GM12878 (cell line): ENCODE measurements at regions of chr17 and their contacts with region 1.

Region 1: DNA sequence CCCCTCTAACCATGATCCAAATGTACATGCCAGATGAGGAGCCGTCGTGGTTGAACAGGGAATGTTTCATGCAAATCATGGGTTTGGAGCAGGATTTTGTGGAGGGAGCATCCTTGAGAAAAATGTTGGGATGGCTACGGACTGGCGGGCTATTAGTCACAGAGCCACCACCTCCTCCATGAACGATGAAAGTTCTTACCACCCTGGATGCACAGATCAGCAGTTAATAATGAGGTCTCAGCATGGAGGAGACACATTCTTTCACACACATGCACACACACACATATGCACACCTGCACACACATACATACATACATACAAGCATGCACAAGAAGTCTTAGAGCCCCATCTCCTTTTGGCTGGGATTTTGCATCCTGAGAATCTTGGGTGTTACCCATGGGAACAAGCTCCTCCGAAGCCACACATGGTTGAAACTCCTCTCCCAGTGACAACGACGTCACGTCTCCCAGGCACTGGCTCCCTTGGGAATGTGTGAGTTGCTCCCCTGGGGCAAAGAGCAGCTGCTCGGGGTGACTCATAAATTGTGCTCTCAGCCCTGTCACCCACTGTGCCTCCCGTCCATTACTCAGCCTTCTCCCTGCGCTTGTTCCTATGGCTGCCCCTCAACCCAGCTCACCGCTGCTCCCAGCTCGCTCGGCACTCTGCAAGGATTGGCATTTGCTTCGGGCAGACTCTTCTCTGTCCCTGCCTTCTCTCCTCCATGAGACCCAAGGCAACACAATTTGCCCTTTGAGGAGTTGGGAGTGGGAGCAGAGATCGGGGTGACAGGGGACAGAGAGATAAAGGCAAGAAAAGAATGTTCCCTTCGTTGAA is 344.6 kb downstream of the SOX9 start:
- DNase-seq: peak; percentile 93
- ATAC-seq: peak; percentile 78
- H3K4me3 ChIP-seq: peak overlapping the region; percentile 10; the same call in 1 of the 2 replicates
- H3K27ac ChIP-seq: peak overlapping the region; percentile 78
- H3K4me1 ChIP-seq: peaks cover 41% of the 10 kb centered on the region
- H3K27me3 ChIP-seq: no peaks in the 10 kb centered on the region
- CTCF ChIP-seq: peak in 1 of 3 experiments; percentile 30; a peak in 1 of 6 replicates
- EP300 ChIP-seq: peak; percentile 38 to 66; a peak in 3 of 4 replicates
- POLR2A ChIP-seq: no peak
- RAD21 ChIP-seq: 0 out of 2 replicates have a peak, but pooled peaks have one; percentile 1

Region 2: DNA sequence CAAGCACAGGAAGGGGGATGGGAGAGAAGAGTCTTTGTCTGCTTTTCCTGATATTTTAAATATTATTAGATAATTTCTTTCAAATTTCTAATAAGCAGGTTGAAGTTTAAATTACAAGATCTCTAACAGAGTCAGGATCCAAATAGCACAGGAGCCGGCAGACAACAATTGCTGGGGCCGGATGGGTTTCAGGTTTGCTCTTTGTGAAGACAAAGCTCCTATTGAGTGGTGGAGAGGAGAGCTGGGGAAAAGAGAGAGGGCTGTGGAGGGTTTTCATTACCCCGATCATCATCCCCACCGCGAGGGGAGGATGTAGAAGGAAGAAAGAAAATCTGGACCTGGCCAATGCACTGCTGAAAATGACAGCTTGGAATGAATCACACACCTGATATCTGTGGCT is 147.3 kb before region 1 on chr17:
- CTCF ChIA-PET with region 1: interaction called, 4 read pairs
- POLR2A ChIA-PET with region 1: no interaction called
- RAD21 ChIA-PET with region 1: interaction called, 14 read pairs
- SMC1A ChIA-PET with region 1: interaction called, 21 read pairs
- in situ Hi-C with region 1: no loop called
- intact Hi-C with region 1: loop called (anchors 1 kb)
- DNase-seq: no peak
- ATAC-seq: peak; percentile 13
- H3K4me3 ChIP-seq: no peak overlapping the region
- H3K27ac ChIP-seq: no peak overlapping the region
- H3K4me1 ChIP-seq: peaks cover 16% of the 10 kb centered on the region
- H3K27me3 ChIP-seq: no peaks in the 10 kb centered on the region
- CTCF ChIP-seq: no peak
- EP300 ChIP-seq: 0 out of 4 replicates have a peak, but pooled peaks of 1 of the 2 experiments have one; percentile 4
- POLR2A ChIP-seq: no peak
- RAD21 ChIP-seq: no peak

Region 3: GRCh38 chr17:72342627-72343527 is 122.5 kb before region 1 on chr17:
- CTCF ChIA-PET with region 1: no interaction called
- POLR2A ChIA-PET with region 1: no interaction called
- RAD21 ChIA-PET with region 1: no interaction called
- SMC1A ChIA-PET with region 1: no interaction called
- in situ Hi-C with region 1: no loop called
- intact Hi-C with region 1: no loop called
- DNase-seq: no peak
- ATAC-seq: no peak
- H3K4me3 ChIP-seq: no peak overlapping the region
- H3K27ac ChIP-seq: no peak overlapping the region
- H3K4me1 ChIP-seq: no peaks in the 10 kb centered on the region; the same call in 1 of the 2 replicates
- H3K27me3 ChIP-seq: no peaks in the 10 kb centered on the region
- CTCF ChIP-seq: no peak
- EP300 ChIP-seq: no peak
- POLR2A ChIP-seq: no peak
- RAD21 ChIP-seq: no peak

Region 4: GRCh38 chr17:72426948-72427760 is 38.3 kb before region 1 on chr17:
- CTCF ChIA-PET with region 1: interaction called, 101 read pairs
- POLR2A ChIA-PET with region 1: interaction called, 170 read pairs
- RAD21 ChIA-PET with region 1: interaction called, 320 read pairs
- SMC1A ChIA-PET with region 1: interaction called, 335 read pairs
- in situ Hi-C with region 1: loop called (anchors 5 kb)
- intact Hi-C with region 1: loop called (anchors 1 kb)
- DNase-seq: no peak
- ATAC-seq: no peak
- H3K4me3 ChIP-seq: no peak overlapping the region
- H3K27ac ChIP-seq: peak overlapping the region; percentile 21; the same call in 1 of the 2 replicates
- H3K4me1 ChIP-seq: peaks cover 33% of the 10 kb centered on the region
- H3K27me3 ChIP-seq: no peaks in the 10 kb centered on the region
- CTCF ChIP-seq: no peak
- EP300 ChIP-seq: no peak
- POLR2A ChIP-seq: no peak
- RAD21 ChIP-seq: no peak; the same call in 1 of the 2 replicates

Region 5: DNA sequence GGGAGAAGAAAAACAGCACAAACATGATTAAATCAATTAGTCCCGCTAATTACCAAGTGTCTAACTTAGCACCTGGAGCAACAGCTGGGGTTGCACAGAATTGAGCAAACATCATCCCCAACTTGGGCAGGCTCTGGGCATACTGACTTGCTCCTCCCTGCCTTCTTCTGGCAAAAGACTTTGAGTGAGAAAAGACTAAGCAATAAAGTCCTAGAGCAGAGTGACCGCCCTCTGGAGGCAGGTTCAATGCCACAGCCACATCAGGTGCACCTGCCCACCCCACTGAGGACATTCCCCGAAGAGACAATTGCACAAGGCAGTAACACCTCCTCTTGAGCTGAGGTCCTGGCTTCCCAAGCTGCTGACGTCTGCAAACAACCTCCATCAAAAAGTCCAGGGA is 13.7 kb after region 1 on chr17:
- CTCF ChIA-PET with region 1: interaction called, 13 read pairs
- POLR2A ChIA-PET with region 1: interaction called, 6 read pairs
- RAD21 ChIA-PET with region 1: interaction called, 15 read pairs
- SMC1A ChIA-PET with region 1: interaction called, 12 read pairs
- in situ Hi-C with region 1: no loop called
- intact Hi-C with region 1: no loop called
- DNase-seq: no peak
- ATAC-seq: peak; percentile 64
- H3K4me3 ChIP-seq: no peak overlapping the region
- H3K27ac ChIP-seq: no peak overlapping the region
- H3K4me1 ChIP-seq: no peaks in the 10 kb centered on the region
- H3K27me3 ChIP-seq: no peaks in the 10 kb centered on the region
- CTCF ChIP-seq: peak; percentile 16 to 30 (median 16); a peak in 3 of 6 replicates
- EP300 ChIP-seq: no peak
- POLR2A ChIP-seq: no peak
- RAD21 ChIP-seq: peak; percentile 47; the same call in 1 of the 2 replicates

Region 6: DNA sequence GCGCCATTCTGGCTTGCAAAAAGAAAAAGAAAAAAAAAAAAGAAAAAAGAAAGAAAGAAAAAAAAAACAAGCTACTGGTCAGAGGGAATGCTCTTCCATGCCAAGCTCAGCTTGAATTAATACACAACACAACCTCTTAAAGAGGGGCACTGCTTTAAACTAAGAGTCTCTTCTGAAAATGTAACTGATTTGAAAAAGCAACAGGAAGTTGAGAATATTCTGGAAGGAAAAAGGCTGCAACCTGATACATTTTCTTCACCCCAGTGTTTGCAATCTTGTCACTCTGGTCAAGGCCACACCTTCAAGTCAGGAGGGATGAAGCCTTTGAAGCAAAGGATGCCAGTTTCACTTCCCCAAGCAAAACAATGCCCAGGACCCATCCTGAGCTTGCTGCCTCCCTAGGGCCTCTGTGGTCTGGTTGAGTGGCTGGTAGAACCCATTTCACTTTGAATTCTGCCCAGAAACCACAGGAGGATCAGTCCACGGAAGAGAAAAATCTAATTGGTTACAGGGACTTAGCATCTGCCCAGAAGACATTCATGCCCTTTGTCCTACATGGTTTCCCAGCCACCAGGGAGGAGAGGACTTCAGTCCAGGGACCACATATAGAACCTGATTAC is 45.1 kb after region 1 on chr17:
- CTCF ChIA-PET with region 1: interaction called, 111 read pairs
- POLR2A ChIA-PET with region 1: interaction called, 143 read pairs
- RAD21 ChIA-PET with region 1: interaction called, 353 read pairs
- SMC1A ChIA-PET with region 1: interaction called, 231 read pairs
- in situ Hi-C with region 1: no loop called
- intact Hi-C with region 1: loop called (anchors 1 kb)
- DNase-seq: peak; percentile 92
- ATAC-seq: peak; percentile 80
- H3K4me3 ChIP-seq: no peak overlapping the region
- H3K27ac ChIP-seq: no peak overlapping the region
- H3K4me1 ChIP-seq: peaks cover 15% of the 10 kb centered on the region
- H3K27me3 ChIP-seq: no peaks in the 10 kb centered on the region
- CTCF ChIP-seq: no peak
- EP300 ChIP-seq: peak in 1 of 2 experiments; percentile 69; a peak in 1 of 4 replicates
- POLR2A ChIP-seq: no peak
- RAD21 ChIP-seq: no peak